ENCODE measurements at regions of chr13 and their contacts with region 1.

Region 1: DNA sequence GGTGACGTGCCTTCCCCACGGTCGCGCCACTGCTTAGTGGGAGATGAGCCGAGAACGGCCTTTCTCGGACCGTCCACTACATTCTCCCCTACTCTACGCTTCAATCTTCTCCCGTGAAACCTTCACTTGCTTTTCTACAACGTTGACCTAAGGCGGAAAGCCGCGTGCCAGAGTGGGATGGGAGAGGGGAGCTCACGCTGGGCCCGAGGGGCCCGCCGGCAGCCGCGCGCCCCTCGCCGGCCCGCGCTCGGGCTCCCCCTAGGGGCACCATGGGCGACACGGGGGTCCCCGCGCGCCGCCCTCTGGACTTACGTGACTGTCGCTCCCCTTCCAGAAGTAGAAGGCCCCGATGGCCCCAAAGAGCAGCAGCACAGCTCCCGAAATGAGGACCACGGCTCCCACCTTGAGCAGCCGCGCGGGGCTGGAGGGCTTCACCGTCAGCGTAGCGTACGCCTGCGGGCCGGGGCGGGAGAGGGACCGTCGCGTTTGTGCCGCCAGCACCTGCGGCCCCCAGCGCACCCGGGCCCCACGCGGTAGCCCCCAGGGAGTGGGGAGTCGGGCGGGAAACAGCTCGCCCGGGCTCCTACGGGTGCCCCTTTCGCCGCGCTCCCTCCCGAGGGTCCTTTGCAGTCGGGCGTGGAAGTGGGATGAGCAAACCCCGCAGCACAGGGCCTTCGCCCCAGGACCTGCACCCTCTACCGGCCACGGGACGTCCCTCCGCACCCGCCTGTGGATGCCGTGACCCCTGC is 727 bp downstream of the CNMD start:
- DNase-seq: no peak
- ATAC-seq: peak; percentile 68
- H3K4me3 ChIP-seq: no peak overlapping the region
- H3K27ac ChIP-seq: no peak overlapping the region
- H3K4me1 ChIP-seq: no peaks in the 10 kb centered on the region; the same call in 1 of the 2 replicates
- H3K27me3 ChIP-seq: peaks cover 2 to 14% of the 10 kb centered on the region in 2 experiments; a peak in 3 of 4 replicates
- CTCF ChIP-seq: peak; percentile 27 to 42 (median 27); a peak in 4 of 6 replicates
- EP300 ChIP-seq: no peak
- POLR2A ChIP-seq: no peak
- RAD21 ChIP-seq: peak; percentile 47

Region 2: GRCh38 chr13:52695856-52696255 is 43.0 kb before region 1 on chr13:
- CTCF ChIA-PET with region 1: interaction called, 6 read pairs
- POLR2A ChIA-PET with region 1: no interaction called
- RAD21 ChIA-PET with region 1: no interaction called
- SMC1A ChIA-PET with region 1: interaction called, 17 read pairs
- in situ Hi-C with region 1: no loop called
- intact Hi-C with region 1: no loop called
- DNase-seq: peak; percentile 3
- ATAC-seq: peak; percentile 90
- H3K4me3 ChIP-seq: no peak overlapping the region
- H3K27ac ChIP-seq: no peak overlapping the region
- H3K4me1 ChIP-seq: no peaks in the 10 kb centered on the region
- H3K27me3 ChIP-seq: no peaks in the 10 kb centered on the region
- CTCF ChIP-seq: no peak
- EP300 ChIP-seq: no peak
- POLR2A ChIP-seq: no peak
- RAD21 ChIP-seq: no peak

Region 3: GRCh38 chr13:52713894-52714293 is 25.0 kb before region 1 on chr13:
- CTCF ChIA-PET with region 1: interaction called, 3 read pairs
- POLR2A ChIA-PET with region 1: no interaction called
- RAD21 ChIA-PET with region 1: interaction called, 7 read pairs
- SMC1A ChIA-PET with region 1: interaction called, 13 read pairs
- in situ Hi-C with region 1: no loop called
- intact Hi-C with region 1: no loop called
- DNase-seq: no peak
- ATAC-seq: no peak
- H3K4me3 ChIP-seq: no peak overlapping the region
- H3K27ac ChIP-seq: no peak overlapping the region
- H3K4me1 ChIP-seq: no peaks in the 10 kb centered on the region
- H3K27me3 ChIP-seq: no peaks in the 10 kb centered on the region
- CTCF ChIP-seq: no peak
- EP300 ChIP-seq: no peak
- POLR2A ChIP-seq: no peak
- RAD21 ChIP-seq: no peak

Region 4: DNA sequence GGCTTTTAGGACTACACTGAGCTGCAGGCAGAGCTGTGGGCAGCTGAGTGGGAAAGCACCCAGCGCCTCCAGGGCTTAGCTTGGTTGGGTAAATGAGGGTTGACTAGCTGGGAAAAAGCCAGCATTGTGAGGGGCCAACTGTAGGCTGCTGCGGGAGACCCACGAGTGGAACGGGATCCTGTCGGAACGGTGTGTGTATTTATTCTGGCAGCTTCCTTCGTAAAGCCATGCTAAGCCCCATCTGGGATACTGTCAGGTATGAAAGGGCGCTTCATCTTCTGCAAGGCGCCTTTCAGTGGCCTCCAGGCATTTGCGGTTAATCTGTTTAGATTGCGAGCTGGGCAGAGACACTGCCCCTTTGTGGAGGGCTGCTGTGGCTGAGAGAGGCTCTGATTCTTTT is 40.2 kb after region 1 on chr13:
- CTCF ChIA-PET with region 1: interaction called, 14 read pairs
- POLR2A ChIA-PET with region 1: interaction called, 5 read pairs
- RAD21 ChIA-PET with region 1: interaction called, 16 read pairs
- SMC1A ChIA-PET with region 1: interaction called, 12 read pairs
- in situ Hi-C with region 1: no loop called
- intact Hi-C with region 1: no loop called
- DNase-seq: no peak
- ATAC-seq: peak; percentile 60
- H3K4me3 ChIP-seq: no peak overlapping the region
- H3K27ac ChIP-seq: no peak overlapping the region
- H3K4me1 ChIP-seq: no peaks in the 10 kb centered on the region
- H3K27me3 ChIP-seq: peaks cover 0 to 5% of the 10 kb centered on the region in 2 experiments; a peak in 1 of 4 replicates
- CTCF ChIP-seq: no peak
- EP300 ChIP-seq: no peak
- POLR2A ChIP-seq: no peak
- RAD21 ChIP-seq: no peak

Region 5: GRCh38 chr13:52830946-52831345 is 92.1 kb after region 1 on chr13:
- CTCF ChIA-PET with region 1: no interaction called
- POLR2A ChIA-PET with region 1: no interaction called
- RAD21 ChIA-PET with region 1: no interaction called
- SMC1A ChIA-PET with region 1: no interaction called
- in situ Hi-C with region 1: no loop called
- intact Hi-C with region 1: no loop called
- DNase-seq: no peak
- ATAC-seq: no peak
- H3K4me3 ChIP-seq: no peak overlapping the region
- H3K27ac ChIP-seq: no peak overlapping the region
- H3K4me1 ChIP-seq: no peaks in the 10 kb centered on the region
- H3K27me3 ChIP-seq: no peaks in the 10 kb centered on the region; a peak in 2 of 4 replicates
- CTCF ChIP-seq: no peak
- EP300 ChIP-seq: no peak
- POLR2A ChIP-seq: no peak
- RAD21 ChIP-seq: no peak

Region 6: DNA sequence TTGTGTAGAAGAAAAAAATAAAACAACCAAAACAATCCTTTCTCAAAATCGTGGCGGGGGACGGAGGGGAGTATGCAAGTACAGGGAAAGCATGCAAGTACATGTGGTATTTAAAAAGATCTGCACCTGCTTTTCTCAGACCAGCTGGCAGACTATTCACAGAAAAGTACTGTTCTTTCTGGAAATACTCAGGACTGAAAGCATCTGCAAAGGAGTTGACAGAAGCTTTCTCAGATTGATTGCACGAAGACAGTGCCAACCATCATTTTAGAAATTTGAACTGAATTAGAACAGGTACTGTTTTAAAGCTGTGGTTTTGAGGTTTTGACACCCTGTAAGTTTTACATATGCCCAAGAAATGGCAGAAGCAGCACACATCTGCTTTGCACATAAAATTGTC is 129.3 kb after region 1 on chr13:
- CTCF ChIA-PET with region 1: no interaction called
- POLR2A ChIA-PET with region 1: no interaction called
- RAD21 ChIA-PET with region 1: no interaction called
- SMC1A ChIA-PET with region 1: no interaction called
- in situ Hi-C with region 1: no loop called
- intact Hi-C with region 1: no loop called
- DNase-seq: no peak
- ATAC-seq: peak; percentile 45
- H3K4me3 ChIP-seq: no peak overlapping the region
- H3K27ac ChIP-seq: no peak overlapping the region
- H3K4me1 ChIP-seq: peaks cover 8% of the 10 kb centered on the region; the same call in 1 of the 2 replicates
- H3K27me3 ChIP-seq: no peaks in the 10 kb centered on the region
- CTCF ChIP-seq: no peak
- EP300 ChIP-seq: no peak
- POLR2A ChIP-seq: no peak
- RAD21 ChIP-seq: no peak

Region 7: DNA sequence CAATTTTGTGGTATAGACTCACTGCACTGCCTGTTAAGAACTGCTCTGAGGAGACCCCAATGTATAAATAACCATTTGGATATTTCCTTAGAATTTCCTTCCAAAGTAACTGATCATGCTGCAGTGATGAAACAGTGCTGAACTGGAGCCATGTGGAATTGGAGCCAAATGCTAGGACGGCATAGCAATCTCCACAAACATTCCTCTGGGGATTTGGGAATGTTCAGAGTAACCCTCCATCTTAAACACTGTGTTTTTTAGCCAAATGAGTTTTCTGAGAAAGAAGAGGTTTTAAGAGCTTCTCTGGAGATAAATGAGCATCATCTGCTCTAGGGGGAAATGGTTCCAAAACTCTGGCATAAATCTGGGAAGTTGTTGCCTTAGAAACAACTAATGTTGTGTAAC is 387.9 kb after region 1 on chr13:
- CTCF ChIA-PET with region 1: no interaction called
- POLR2A ChIA-PET with region 1: no interaction called
- RAD21 ChIA-PET with region 1: no interaction called
- SMC1A ChIA-PET with region 1: no interaction called
- in situ Hi-C with region 1: no loop called
- intact Hi-C with region 1: no loop called
- DNase-seq: no peak
- ATAC-seq: no peak
- H3K4me3 ChIP-seq: no peak overlapping the region
- H3K27ac ChIP-seq: no peak overlapping the region
- H3K4me1 ChIP-seq: no peaks in the 10 kb centered on the region
- H3K27me3 ChIP-seq: no peaks in the 10 kb centered on the region
- CTCF ChIP-seq: no peak
- EP300 ChIP-seq: no peak
- POLR2A ChIP-seq: no peak
- RAD21 ChIP-seq: no peak